PC-3 (cell line): ENCODE measurements at regions of chr13 and their contacts with region 1.

Region 1: DNA sequence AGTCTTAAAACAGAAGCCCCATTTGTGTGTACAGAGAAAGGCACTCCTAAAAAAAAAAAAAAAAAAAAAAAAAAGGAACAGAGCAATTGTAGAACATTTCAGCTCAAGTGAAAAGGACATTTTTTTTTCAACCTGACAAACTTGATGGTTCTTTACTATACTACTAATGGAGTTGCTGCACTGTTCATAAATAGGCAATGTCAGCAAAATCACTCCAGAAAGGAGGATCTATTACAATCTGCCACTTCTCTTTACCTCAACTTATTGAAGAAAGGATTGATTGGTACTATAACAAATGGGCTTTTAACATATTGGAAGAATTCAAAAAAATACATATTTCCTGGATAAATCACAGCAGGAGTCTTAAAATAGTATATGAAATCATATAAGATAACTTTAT is 1517.7 kb downstream of the SLITRK1 start:
- DNase-seq: no peak
- ATAC-seq: no peak
- H3K4me3 ChIP-seq: no peak overlapping the region
- H3K27ac ChIP-seq: no peak overlapping the region
- H3K4me1 ChIP-seq: no peaks in the 10 kb centered on the region
- H3K27me3 ChIP-seq: no peaks in the 10 kb centered on the region
- CTCF ChIP-seq: no peak

Region 2: GRCh38 chr13:82344867-82345266 is 19.7 kb before region 1 on chr13:
- CTCF ChIA-PET with region 1: no interaction called
- POLR2A ChIA-PET with region 1: no interaction called
- intact Hi-C with region 1: no loop called
- DNase-seq: no peak
- ATAC-seq: no peak
- H3K4me3 ChIP-seq: no peak overlapping the region
- H3K27ac ChIP-seq: no peak overlapping the region
- H3K4me1 ChIP-seq: no peaks in the 10 kb centered on the region
- H3K27me3 ChIP-seq: no peaks in the 10 kb centered on the region
- CTCF ChIP-seq: no peak

Region 3: GRCh38 chr13:83943530-83944279 is 1579.2 kb after region 1 on chr13:
- CTCF ChIA-PET with region 1: no interaction called
- POLR2A ChIA-PET with region 1: no interaction called
- intact Hi-C with region 1: loop called (anchors 10 kb)
- DNase-seq: peak; percentile 19
- ATAC-seq: no peak
- H3K4me3 ChIP-seq: no peak overlapping the region
- H3K27ac ChIP-seq: no peak overlapping the region
- H3K4me1 ChIP-seq: no peaks in the 10 kb centered on the region; the same call in 1 of the 2 replicates
- H3K27me3 ChIP-seq: no peaks in the 10 kb centered on the region
- CTCF ChIP-seq: peak; percentile 26; the same call in 1 of the 2 replicates